ENCODE measurements at regions of chr11 and their contacts with region 1.

Region 1: GRCh38 chr11:44936525-44936924 is 14.2 kb downstream of the TP53I11 start:
- DNase-seq: peak; percentile 89 to 95
- H3K4me3 ChIP-seq: no peak overlapping the region
- H3K27ac ChIP-seq: no peak overlapping the region
- H3K4me1 ChIP-seq: peaks cover 0 to 33% (median 14%) of the 10 kb centered on the region in 4 donors
- H3K27me3 ChIP-seq: no peaks in the 10 kb centered on the region
- CTCF ChIP-seq: peak in 6 of 7 experiments; percentile 52 to 97 (median 95)
- EP300 ChIP-seq: no peak
- POLR2A ChIP-seq: no peak

Region 2: GRCh38 chr11:45322891-45323600 is 386.5 kb after region 1 on chr11:
- intact Hi-C with region 1: loop called (anchors 10 kb)
- DNase-seq: no peak
- H3K4me3 ChIP-seq: no peak overlapping the region
- H3K27ac ChIP-seq: no peak overlapping the region
- H3K4me1 ChIP-seq: no peaks in the 10 kb centered on the region
- H3K27me3 ChIP-seq: peaks cover 0 to 21% (median 5%) of the 10 kb centered on the region in 3 donors
- CTCF ChIP-seq: no peak
- EP300 ChIP-seq: no peak
- POLR2A ChIP-seq: no peak